ENCODE measurements at regions of chr4 and their contacts with region 1.

Region 1: GRCh38 chr4:77358315-77358928 is 201.4 kb downstream of the CCNG2 start:
- DNase-seq: peak; percentile 20
- H3K4me3 ChIP-seq: no peak overlapping the region
- H3K27ac ChIP-seq: no peak overlapping the region
- H3K4me1 ChIP-seq: no peaks in the 10 kb centered on the region
- H3K27me3 ChIP-seq: no peaks in the 10 kb centered on the region
- CTCF ChIP-seq: peak; percentile 50

Region 2: GRCh38 chr4:77022560-77023179 is 335.8 kb before region 1 on chr4:
- CTCF ChIA-PET with region 1: no interaction called
- POLR2A ChIA-PET with region 1: no interaction called
- intact Hi-C with region 1: no loop called
- DNase-seq: peak; percentile 78
- H3K4me3 ChIP-seq: no peak overlapping the region
- H3K27ac ChIP-seq: peak overlapping the region; percentile 60
- H3K4me1 ChIP-seq: peaks cover 22% of the 10 kb centered on the region
- H3K27me3 ChIP-seq: no peaks in the 10 kb centered on the region
- CTCF ChIP-seq: no peak

Region 3: GRCh38 chr4:77240469-77241066 is 117.9 kb before region 1 on chr4:
- CTCF ChIA-PET with region 1: no interaction called
- POLR2A ChIA-PET with region 1: no interaction called
- intact Hi-C with region 1: loop called (anchors 2 kb)
- DNase-seq: peak; percentile 45
- H3K4me3 ChIP-seq: no peak overlapping the region
- H3K27ac ChIP-seq: no peak overlapping the region
- H3K4me1 ChIP-seq: no peaks in the 10 kb centered on the region
- H3K27me3 ChIP-seq: peaks cover 9% of the 10 kb centered on the region
- CTCF ChIP-seq: peak; percentile 62